GM12878 (cell line): ENCODE measurements at regions of chr6 and their contacts with region 1.

Region 1: GRCh38 chr6:40251637-40252300 is 317.5 kb upstream of the MOCS1 start:
- DNase-seq: peak; percentile 63
- ATAC-seq: peak; percentile 71
- H3K4me3 ChIP-seq: no peak overlapping the region
- H3K27ac ChIP-seq: no peak overlapping the region
- H3K4me1 ChIP-seq: no peaks in the 10 kb centered on the region; the same call in 1 of the 2 replicates
- H3K27me3 ChIP-seq: no peaks in the 10 kb centered on the region; a peak in 1 of 4 replicates
- CTCF ChIP-seq: no peak
- EP300 ChIP-seq: peak; percentile 78 to 81; a peak in 3 of 4 replicates
- POLR2A ChIP-seq: no peak
- RAD21 ChIP-seq: no peak

Region 2: DNA sequence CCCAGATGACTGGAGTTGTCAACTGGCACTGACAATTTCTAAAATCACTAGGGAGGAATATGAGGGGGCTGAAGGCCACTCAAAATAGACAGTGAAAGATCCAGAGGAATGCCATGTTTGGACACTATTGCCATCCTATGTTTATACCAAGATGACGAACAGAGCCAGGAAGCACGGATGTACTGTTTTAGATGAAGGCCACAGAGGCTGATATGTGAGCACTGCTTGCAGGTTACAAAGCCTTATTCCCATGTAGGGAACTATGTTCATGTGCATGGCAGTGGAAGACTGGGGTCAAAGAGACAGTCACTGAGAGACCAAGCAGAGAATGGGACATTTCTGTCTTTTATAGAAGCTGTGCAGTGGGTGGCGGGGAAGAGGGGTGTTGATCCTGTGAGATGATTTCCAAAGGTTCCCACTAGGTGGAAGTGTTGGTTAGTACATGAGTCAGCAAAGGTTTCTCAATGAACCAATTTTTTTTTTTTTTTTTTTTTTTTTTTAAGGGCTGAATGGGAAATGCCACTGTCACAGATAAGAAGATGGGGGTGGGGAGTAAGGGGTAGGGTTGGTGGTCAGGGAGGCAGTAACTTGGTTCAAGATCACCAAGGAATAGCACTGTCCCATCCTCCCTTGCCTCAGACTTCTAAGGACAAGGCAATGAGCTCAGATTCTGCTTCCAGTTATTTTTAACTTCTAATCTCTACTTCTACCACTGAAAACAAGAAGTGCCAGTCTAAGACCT is 270.8 kb before region 1 on chr6:
- CTCF ChIA-PET with region 1: interaction called, 6 read pairs
- POLR2A ChIA-PET with region 1: interaction called, 3 read pairs
- RAD21 ChIA-PET with region 1: interaction called, 7 read pairs
- SMC1A ChIA-PET with region 1: interaction called, 12 read pairs
- in situ Hi-C with region 1: no loop called
- intact Hi-C with region 1: no loop called
- DNase-seq: no peak
- ATAC-seq: peak; percentile 79
- H3K4me3 ChIP-seq: no peak overlapping the region
- H3K27ac ChIP-seq: no peak overlapping the region
- H3K4me1 ChIP-seq: no peaks in the 10 kb centered on the region
- H3K27me3 ChIP-seq: no peaks in the 10 kb centered on the region; a peak in 1 of 4 replicates
- CTCF ChIP-seq: peak; percentile 22 to 68 (median 30); a peak in 4 of 6 replicates
- EP300 ChIP-seq: no peak
- POLR2A ChIP-seq: no peak
- RAD21 ChIP-seq: peak; percentile 62

Region 3: GRCh38 chr6:40143924-40144323 is 107.8 kb before region 1 on chr6:
- CTCF ChIA-PET with region 1: interaction called, 5 read pairs
- POLR2A ChIA-PET with region 1: interaction called, 14 read pairs
- RAD21 ChIA-PET with region 1: interaction called, 16 read pairs
- SMC1A ChIA-PET with region 1: interaction called, 35 read pairs
- in situ Hi-C with region 1: no loop called
- intact Hi-C with region 1: loop called (anchors 2 kb)
- DNase-seq: no peak
- ATAC-seq: no peak
- H3K4me3 ChIP-seq: no peak overlapping the region
- H3K27ac ChIP-seq: no peak overlapping the region
- H3K4me1 ChIP-seq: peaks cover 4% of the 10 kb centered on the region; the same call in 1 of the 2 replicates
- H3K27me3 ChIP-seq: no peaks in the 10 kb centered on the region
- CTCF ChIP-seq: no peak
- EP300 ChIP-seq: no peak
- POLR2A ChIP-seq: no peak
- RAD21 ChIP-seq: no peak

Region 4: GRCh38 chr6:40164345-40164755 is 87.4 kb before region 1 on chr6:
- CTCF ChIA-PET with region 1: no interaction called
- POLR2A ChIA-PET with region 1: interaction called, 3 read pairs
- RAD21 ChIA-PET with region 1: interaction called, 3 read pairs
- SMC1A ChIA-PET with region 1: interaction called, 15 read pairs
- in situ Hi-C with region 1: no loop called
- intact Hi-C with region 1: no loop called
- DNase-seq: no peak
- ATAC-seq: no peak
- H3K4me3 ChIP-seq: no peak overlapping the region
- H3K27ac ChIP-seq: no peak overlapping the region
- H3K4me1 ChIP-seq: no peaks in the 10 kb centered on the region
- H3K27me3 ChIP-seq: no peaks in the 10 kb centered on the region
- CTCF ChIP-seq: no peak
- EP300 ChIP-seq: no peak
- POLR2A ChIP-seq: no peak
- RAD21 ChIP-seq: no peak

Region 5: DNA sequence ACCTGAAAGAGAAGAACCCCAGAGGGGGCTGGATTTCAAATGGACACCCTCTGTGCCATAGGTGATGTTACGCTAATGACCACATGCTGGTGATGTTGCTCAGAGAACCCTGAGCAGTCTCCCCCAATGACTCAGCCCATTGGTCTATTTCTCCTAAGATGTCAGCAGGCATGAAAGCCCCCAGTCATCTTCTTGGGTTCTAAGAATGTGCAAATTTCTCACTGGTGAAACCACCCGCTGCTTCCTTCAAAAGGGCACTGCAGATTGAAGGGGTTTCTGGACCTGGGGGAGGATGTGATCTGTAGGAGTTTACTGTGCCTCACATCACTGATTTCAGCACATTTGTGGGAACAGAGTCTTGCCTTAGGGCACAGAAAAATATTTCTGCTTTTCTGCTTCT is 19.1 kb before region 1 on chr6:
- CTCF ChIA-PET with region 1: interaction called, 4 read pairs
- POLR2A ChIA-PET with region 1: interaction called, 3 read pairs
- RAD21 ChIA-PET with region 1: interaction called, 23 read pairs
- SMC1A ChIA-PET with region 1: interaction called, 43 read pairs
- in situ Hi-C with region 1: no loop called
- intact Hi-C with region 1: no loop called
- DNase-seq: no peak
- ATAC-seq: peak; percentile 93
- H3K4me3 ChIP-seq: no peak overlapping the region
- H3K27ac ChIP-seq: no peak overlapping the region
- H3K4me1 ChIP-seq: no peaks in the 10 kb centered on the region
- H3K27me3 ChIP-seq: no peaks in the 10 kb centered on the region
- CTCF ChIP-seq: peak in 1 of 3 experiments; percentile 17; a peak in 1 of 6 replicates
- EP300 ChIP-seq: peak in 1 of 2 experiments; percentile 27; a peak in 2 of 4 replicates
- POLR2A ChIP-seq: no peak
- RAD21 ChIP-seq: no peak

Region 6: DNA sequence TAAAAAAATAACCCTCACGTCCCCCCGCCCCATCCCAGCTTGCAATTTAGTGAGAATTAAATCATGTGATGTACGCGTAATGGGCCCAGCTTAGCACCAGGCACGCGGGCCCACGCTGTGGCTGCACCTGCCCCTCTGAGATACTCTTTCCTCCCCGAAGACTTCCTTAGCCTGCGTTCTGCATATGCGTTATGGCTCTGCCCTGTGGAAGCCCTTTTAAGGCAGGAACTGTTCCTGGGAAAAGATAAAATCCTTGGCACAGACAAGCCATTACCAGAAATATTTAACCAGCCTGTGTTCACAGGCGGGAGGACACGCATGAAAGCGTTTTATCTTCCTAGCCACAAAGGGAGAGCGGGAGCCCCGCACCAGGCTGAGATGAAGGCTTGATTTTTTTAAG is 24.4 kb after region 1 on chr6:
- CTCF ChIA-PET with region 1: interaction called, 4 read pairs
- POLR2A ChIA-PET with region 1: interaction called, 12 read pairs
- RAD21 ChIA-PET with region 1: interaction called, 15 read pairs
- SMC1A ChIA-PET with region 1: interaction called, 10 read pairs
- in situ Hi-C with region 1: no loop called
- intact Hi-C with region 1: no loop called
- DNase-seq: no peak
- ATAC-seq: no peak
- H3K4me3 ChIP-seq: no peak overlapping the region
- H3K27ac ChIP-seq: no peak overlapping the region
- H3K4me1 ChIP-seq: no peaks in the 10 kb centered on the region
- H3K27me3 ChIP-seq: peaks cover 0 to 2% of the 10 kb centered on the region in 2 experiments; a peak in 1 of 4 replicates
- CTCF ChIP-seq: no peak
- EP300 ChIP-seq: no peak
- POLR2A ChIP-seq: no peak
- RAD21 ChIP-seq: no peak

Region 7: GRCh38 chr6:40308533-40309306 is 57.0 kb after region 1 on chr6:
- CTCF ChIA-PET with region 1: interaction called, 42 read pairs
- POLR2A ChIA-PET with region 1: interaction called, 6 read pairs
- RAD21 ChIA-PET with region 1: interaction called, 41 read pairs
- SMC1A ChIA-PET with region 1: interaction called, 24 read pairs
- in situ Hi-C with region 1: no loop called
- intact Hi-C with region 1: no loop called
- DNase-seq: peak; percentile 11
- ATAC-seq: peak; percentile 94
- H3K4me3 ChIP-seq: no peak overlapping the region
- H3K27ac ChIP-seq: no peak overlapping the region
- H3K4me1 ChIP-seq: no peaks in the 10 kb centered on the region
- H3K27me3 ChIP-seq: peaks cover 3 to 9% of the 10 kb centered on the region in 2 experiments; a peak in 3 of 4 replicates
- CTCF ChIP-seq: peak; percentile 84 to 91 (median 89)
- EP300 ChIP-seq: no peak
- POLR2A ChIP-seq: no peak
- RAD21 ChIP-seq: peak; percentile 73

Region 8: DNA sequence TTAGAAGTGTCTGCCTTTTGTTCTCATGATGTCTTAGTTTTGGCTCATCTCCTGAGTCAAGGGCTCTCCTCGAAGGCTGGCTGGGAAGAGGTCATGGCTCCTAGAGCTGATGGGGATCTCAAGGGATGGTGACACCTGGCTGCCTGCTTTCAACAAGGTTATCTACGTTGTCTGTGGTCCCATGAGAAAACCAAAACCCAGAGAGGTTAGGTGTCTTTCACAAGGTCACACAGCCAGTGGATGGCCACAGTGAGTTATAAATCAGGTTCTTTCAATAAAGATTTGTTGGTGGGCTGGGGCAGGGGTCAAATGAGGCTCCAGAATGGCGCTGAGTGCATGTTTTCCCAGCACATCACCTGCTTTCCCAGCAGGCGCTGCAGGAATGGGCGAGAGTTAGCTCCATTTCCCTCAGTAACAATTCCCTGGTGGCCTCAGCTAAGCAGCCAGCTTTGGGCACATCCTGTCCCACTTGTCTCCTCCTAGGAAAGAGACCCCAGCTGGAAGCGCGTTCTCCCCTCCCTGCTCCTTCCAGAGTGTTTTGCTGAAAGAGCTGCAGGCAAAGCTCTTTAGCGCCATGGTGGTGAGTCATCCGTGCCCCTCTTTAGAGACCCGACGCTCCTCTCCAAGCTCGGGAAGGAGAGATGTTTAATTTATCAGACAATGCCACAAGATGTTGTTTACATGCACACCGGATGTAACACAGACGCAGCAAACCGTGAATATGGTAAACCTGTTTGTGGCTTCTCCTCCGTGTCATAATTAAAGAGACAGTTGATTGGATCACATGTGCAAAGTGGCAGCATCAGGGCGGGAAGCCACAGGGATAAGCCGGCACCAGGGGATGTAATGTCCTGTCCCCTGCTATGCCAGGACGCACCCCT is 225.7 kb after region 1 on chr6:
- CTCF ChIA-PET with region 1: no interaction called
- POLR2A ChIA-PET with region 1: no interaction called
- RAD21 ChIA-PET with region 1: no interaction called
- SMC1A ChIA-PET with region 1: no interaction called
- in situ Hi-C with region 1: no loop called
- intact Hi-C with region 1: no loop called
- DNase-seq: no peak
- ATAC-seq: no peak
- H3K4me3 ChIP-seq: no peak overlapping the region
- H3K27ac ChIP-seq: no peak overlapping the region
- H3K4me1 ChIP-seq: no peaks in the 10 kb centered on the region
- H3K27me3 ChIP-seq: peaks cover 0 to 5% of the 10 kb centered on the region in 2 experiments; a peak in 2 of 4 replicates
- CTCF ChIP-seq: no peak
- EP300 ChIP-seq: no peak
- POLR2A ChIP-seq: no peak
- RAD21 ChIP-seq: no peak

Region 9: DNA sequence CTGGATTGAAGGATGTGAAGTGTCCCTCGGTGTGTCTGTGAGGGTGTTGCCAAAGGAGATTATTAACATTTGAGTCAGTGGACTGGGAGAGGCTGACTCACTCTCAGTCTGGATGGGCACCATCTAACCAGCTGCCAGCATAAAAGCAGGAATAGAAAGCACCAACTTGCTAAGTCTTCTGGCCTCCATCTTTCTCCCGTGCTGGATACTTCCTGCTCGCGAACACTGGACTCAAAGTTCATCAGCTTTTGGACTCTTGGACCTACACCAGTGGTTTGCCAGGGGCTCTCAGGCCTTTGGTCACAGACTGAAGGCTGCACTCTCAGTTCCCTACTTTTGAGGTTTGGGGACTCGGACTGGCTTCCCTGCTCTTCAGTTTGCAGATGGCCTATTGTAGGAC is 555.7 kb after region 1 on chr6:
- CTCF ChIA-PET with region 1: no interaction called
- POLR2A ChIA-PET with region 1: no interaction called
- RAD21 ChIA-PET with region 1: no interaction called
- SMC1A ChIA-PET with region 1: no interaction called
- in situ Hi-C with region 1: no loop called
- intact Hi-C with region 1: no loop called
- DNase-seq: no peak
- ATAC-seq: no peak
- H3K4me3 ChIP-seq: no peak overlapping the region
- H3K27ac ChIP-seq: no peak overlapping the region
- H3K4me1 ChIP-seq: peaks cover 16% of the 10 kb centered on the region
- H3K27me3 ChIP-seq: no peaks in the 10 kb centered on the region
- CTCF ChIP-seq: no peak
- EP300 ChIP-seq: no peak
- POLR2A ChIP-seq: no peak
- RAD21 ChIP-seq: no peak

Region 10: GRCh38 chr6:40907198-40907704 is 655.5 kb after region 1 on chr6:
- CTCF ChIA-PET with region 1: no interaction called
- POLR2A ChIA-PET with region 1: no interaction called
- RAD21 ChIA-PET with region 1: no interaction called
- SMC1A ChIA-PET with region 1: no interaction called
- in situ Hi-C with region 1: no loop called
- intact Hi-C with region 1: no loop called
- DNase-seq: no peak
- ATAC-seq: no peak
- H3K4me3 ChIP-seq: no peak overlapping the region
- H3K27ac ChIP-seq: no peak overlapping the region
- H3K4me1 ChIP-seq: no peaks in the 10 kb centered on the region
- H3K27me3 ChIP-seq: peaks cover 0 to 3% of the 10 kb centered on the region in 2 experiments; a peak in 3 of 4 replicates
- CTCF ChIP-seq: no peak
- EP300 ChIP-seq: no peak
- POLR2A ChIP-seq: no peak
- RAD21 ChIP-seq: no peak